ENCODE measurements at regions of chr16 and their contacts with region 1.

Region 1: GRCh38 chr16:7158481-7158880 is 174.2 kb upstream of the RBFOX1 start:
- DNase-seq: no peak
- ATAC-seq: no peak
- H3K4me3 ChIP-seq: no peak overlapping the region
- H3K27ac ChIP-seq: no peak overlapping the region
- H3K4me1 ChIP-seq: no peaks in the 10 kb centered on the region
- H3K27me3 ChIP-seq: no peaks in the 10 kb centered on the region
- CTCF ChIP-seq: no peak

Region 2: DNA sequence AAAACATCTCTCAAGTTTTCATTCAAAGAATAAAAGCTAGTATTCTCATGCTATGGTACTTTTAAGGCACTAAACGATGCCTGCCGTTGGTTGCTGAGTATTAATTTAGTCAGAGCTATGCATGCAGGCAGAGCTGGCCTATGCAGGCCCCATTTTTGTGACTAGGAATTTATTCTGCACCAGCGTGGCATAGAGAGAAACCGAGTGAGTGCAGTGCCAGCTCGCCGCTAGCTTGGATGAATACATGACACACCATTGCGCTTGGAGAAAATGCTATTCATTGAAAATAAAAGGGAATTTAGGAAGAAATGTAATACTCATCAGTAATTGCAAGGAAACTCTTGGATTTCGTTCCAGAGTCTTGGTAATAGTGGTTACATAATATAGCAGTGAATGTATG is 57.4 kb before region 1 on chr16:
- intact Hi-C with region 1: no loop called
- DNase-seq: no peak
- ATAC-seq: no peak
- H3K4me3 ChIP-seq: no peak overlapping the region
- H3K27ac ChIP-seq: no peak overlapping the region
- H3K4me1 ChIP-seq: no peaks in the 10 kb centered on the region
- H3K27me3 ChIP-seq: peaks cover 0 to 4% (median 0%) of the 10 kb centered on the region in 3 donors
- CTCF ChIP-seq: no peak

Region 3: DNA sequence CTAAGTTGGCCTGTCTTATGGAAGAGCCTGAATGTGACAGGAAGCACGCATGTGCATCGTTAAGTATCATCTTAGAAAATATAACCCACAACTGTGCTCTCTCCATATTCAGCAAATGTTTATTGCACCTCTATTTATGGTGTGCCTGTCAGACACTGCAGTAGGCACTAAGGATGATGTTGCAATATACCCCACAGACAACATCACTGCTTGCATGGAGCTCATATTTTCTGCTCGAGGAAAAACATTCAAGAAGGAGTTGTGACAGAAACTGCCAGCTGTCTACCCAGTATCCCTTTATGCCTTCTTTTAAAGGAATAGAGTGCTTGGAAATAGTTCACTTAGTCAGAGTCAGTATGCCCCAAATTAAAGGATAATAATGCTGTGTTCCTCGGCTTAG is 41.8 kb after region 1 on chr16:
- intact Hi-C with region 1: no loop called
- DNase-seq: no peak
- ATAC-seq: no peak
- H3K4me3 ChIP-seq: no peak overlapping the region
- H3K27ac ChIP-seq: no peak overlapping the region
- H3K4me1 ChIP-seq: no peaks in the 10 kb centered on the region
- H3K27me3 ChIP-seq: no peaks in the 10 kb centered on the region
- CTCF ChIP-seq: no peak

Region 4: GRCh38 chr16:7218936-7219335 is 60.5 kb after region 1 on chr16:
- intact Hi-C with region 1: loop called in 1 of 2 experiments (anchors 10 kb)
- DNase-seq: no peak
- ATAC-seq: no peak
- H3K4me3 ChIP-seq: no peak overlapping the region
- H3K27ac ChIP-seq: no peak overlapping the region
- H3K4me1 ChIP-seq: no peaks in the 10 kb centered on the region
- H3K27me3 ChIP-seq: peaks cover 0 to 6% (median 0%) of the 10 kb centered on the region in 3 donors
- CTCF ChIP-seq: no peak